ENCODE measurements at regions of chr15 and their contacts with region 1.

Region 1: GRCh38 chr15:50315814-50316630 is 39.0 kb downstream of the GABPB1 start:
- DNase-seq: peak; percentile 10
- H3K4me3 ChIP-seq: no peak overlapping the region
- H3K27ac ChIP-seq: no peak overlapping the region
- H3K27me3 ChIP-seq: no peaks in the 10 kb centered on the region
- CTCF ChIP-seq: peak; percentile 73

Region 2: DNA sequence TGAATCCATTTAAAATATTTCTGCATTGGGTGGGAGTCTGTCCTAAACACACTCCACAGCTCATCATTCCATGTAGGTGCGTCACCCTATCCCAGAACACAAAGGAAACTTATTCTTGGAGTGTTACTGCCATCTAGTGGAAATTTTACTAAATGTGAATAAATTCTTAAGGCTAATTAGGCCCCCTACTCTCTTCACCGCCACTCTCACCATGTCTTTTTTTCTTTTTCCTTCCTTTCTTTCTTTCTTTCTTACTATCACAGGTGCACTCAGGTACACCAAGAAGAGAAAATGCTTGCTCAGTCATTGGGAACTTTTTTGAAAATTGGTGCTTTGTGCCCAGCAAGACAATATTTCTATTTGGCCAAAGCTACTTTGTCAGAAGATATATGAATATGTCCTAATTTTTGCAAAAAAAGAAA is 170.6 kb before region 1 on chr15:
- CTCF ChIA-PET with region 1: interaction called, 82 read pairs
- POLR2A ChIA-PET with region 1: no interaction called
- DNase-seq: peak; percentile 65
- H3K4me3 ChIP-seq: no peak overlapping the region
- H3K27ac ChIP-seq: no peak overlapping the region
- H3K27me3 ChIP-seq: no peaks in the 10 kb centered on the region
- CTCF ChIP-seq: peak; percentile 46

Region 3: DNA sequence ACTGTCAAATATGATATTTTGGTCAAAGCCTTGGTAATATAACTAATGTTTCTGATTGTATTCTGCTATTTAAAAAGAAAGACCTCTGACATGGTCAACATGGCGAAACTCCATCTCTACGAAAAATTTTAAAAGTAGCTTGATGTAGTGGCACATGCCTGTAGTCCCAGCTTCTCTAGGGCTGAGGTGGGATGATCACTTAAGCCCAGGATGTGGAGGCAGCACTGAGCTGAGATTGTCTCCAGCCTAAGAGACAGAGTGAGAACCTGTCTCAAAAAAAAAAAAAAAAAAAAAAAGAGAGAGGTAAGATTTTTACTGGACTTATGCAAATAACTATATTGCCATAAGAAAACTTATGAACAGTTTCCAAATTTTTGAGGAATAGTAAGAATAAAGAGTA is 164.6 kb before region 1 on chr15:
- CTCF ChIA-PET with region 1: interaction called, 82 read pairs
- POLR2A ChIA-PET with region 1: no interaction called
- DNase-seq: no peak
- H3K4me3 ChIP-seq: no peak overlapping the region
- H3K27ac ChIP-seq: no peak overlapping the region
- H3K27me3 ChIP-seq: no peaks in the 10 kb centered on the region
- CTCF ChIP-seq: no peak

Region 4: DNA sequence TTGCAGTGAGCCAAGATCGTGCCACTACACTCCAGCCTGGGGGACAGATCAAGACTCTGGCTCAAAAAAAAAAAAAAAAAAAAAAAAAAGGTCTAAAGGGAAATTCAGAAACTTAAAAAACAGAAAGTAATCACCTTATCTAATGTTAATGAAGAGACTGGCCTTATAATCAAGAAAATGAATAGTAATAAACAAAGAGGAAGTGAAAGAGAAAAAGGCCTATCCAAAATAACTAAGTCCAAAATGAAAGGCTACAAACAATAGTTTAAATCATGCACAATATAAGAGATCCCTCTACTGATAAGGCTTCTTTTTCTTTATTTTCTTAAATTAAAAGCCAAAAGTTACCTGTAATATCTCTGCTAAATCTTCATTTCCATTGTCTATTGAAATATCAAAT is 13.4 kb before region 1 on chr15:
- CTCF ChIA-PET with region 1: interaction called, 13 read pairs
- POLR2A ChIA-PET with region 1: no interaction called
- DNase-seq: no peak
- H3K4me3 ChIP-seq: no peak overlapping the region
- H3K27ac ChIP-seq: no peak overlapping the region
- H3K27me3 ChIP-seq: no peaks in the 10 kb centered on the region
- CTCF ChIP-seq: no peak

Region 5: GRCh38 chr15:51516291-51516690 is 1200.3 kb after region 1 on chr15:
- CTCF ChIA-PET with region 1: no interaction called
- POLR2A ChIA-PET with region 1: no interaction called
- DNase-seq: no peak
- H3K4me3 ChIP-seq: no peak overlapping the region
- H3K27ac ChIP-seq: no peak overlapping the region
- H3K27me3 ChIP-seq: no peaks in the 10 kb centered on the region
- CTCF ChIP-seq: no peak

Measured in AG04450 (cell line).